Heart left ventricle (tissue), 16 donors: ENCODE measurements at regions of chrX and their contacts with region 1.

Region 1: GRCh38 chrX:45445745-45446412 is 245.2 kb upstream of the DIPK2B start:
- DNase-seq: no peak
- ATAC-seq: no peak
- H3K4me3 ChIP-seq: no peak overlapping the region
- H3K27ac ChIP-seq: no peak overlapping the region
- H3K4me1 ChIP-seq: no peaks in the 10 kb centered on the region
- H3K27me3 ChIP-seq: peaks cover 0 to 29% (median 0%) of the 10 kb centered on the region in 9 donors
- CTCF ChIP-seq: no peak
- POLR2A ChIP-seq: no peak

Region 2: DNA sequence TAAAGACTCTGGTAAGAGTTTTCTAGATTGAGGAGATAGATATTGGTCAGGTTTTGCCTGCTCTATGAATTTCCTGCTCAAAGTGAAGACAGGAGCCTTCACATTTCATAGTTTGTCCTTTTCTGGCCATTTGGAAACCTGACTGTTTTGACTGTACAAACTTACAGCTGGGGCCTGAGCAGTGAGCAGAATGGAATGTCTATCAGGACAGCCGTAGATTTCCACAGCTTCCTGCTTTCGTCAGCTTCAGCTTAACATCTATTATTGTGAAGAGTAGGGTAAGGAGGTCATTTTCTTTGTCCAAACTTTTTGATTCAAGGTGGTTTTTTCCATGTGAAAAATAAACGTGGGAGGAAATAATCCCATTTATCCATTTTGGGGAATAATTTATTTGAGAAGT is 120.9 kb before region 1 on chrX:
- intact Hi-C with region 1: no loop called
- DNase-seq: no peak
- ATAC-seq: no peak
- H3K4me3 ChIP-seq: no peak overlapping the region
- H3K27ac ChIP-seq: no peak overlapping the region
- H3K4me1 ChIP-seq: no peaks in the 10 kb centered on the region
- H3K27me3 ChIP-seq: peaks cover 0 to 39% (median 0%) of the 10 kb centered on the region in 9 donors
- CTCF ChIP-seq: no peak
- POLR2A ChIP-seq: no peak

Region 3: DNA sequence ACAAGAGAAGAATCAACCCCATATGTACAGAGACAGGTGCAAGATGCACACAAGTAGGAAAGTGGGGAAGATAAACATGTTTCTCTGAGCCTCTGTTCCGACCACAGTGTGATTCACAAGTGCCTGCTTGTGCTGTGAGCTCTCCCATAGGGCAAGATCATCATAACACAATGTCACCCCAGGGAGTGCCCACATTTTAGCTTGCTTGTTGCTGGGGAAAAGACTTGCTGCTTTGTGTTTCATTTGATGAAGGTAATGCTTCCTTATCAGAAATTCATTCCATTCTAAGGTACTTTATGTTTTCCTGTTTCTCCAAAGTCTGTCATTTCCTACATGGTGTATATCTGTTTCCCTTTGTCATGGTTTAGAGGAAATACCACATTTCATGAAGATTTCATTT is 59.3 kb after region 1 on chrX:
- intact Hi-C with region 1: loop called in 1 of 10 experiments (anchors 10 kb)
- DNase-seq: no peak
- ATAC-seq: no peak
- H3K4me3 ChIP-seq: no peak overlapping the region
- H3K27ac ChIP-seq: peak overlapping the region in 1 of 12 donors; percentile 81
- H3K4me1 ChIP-seq: peaks cover 0 to 30% (median 14%) of the 10 kb centered on the region in 12 donors
- H3K27me3 ChIP-seq: peaks cover 0 to 5% (median 0%) of the 10 kb centered on the region in 9 donors
- CTCF ChIP-seq: no peak
- POLR2A ChIP-seq: no peak

Region 4: DNA sequence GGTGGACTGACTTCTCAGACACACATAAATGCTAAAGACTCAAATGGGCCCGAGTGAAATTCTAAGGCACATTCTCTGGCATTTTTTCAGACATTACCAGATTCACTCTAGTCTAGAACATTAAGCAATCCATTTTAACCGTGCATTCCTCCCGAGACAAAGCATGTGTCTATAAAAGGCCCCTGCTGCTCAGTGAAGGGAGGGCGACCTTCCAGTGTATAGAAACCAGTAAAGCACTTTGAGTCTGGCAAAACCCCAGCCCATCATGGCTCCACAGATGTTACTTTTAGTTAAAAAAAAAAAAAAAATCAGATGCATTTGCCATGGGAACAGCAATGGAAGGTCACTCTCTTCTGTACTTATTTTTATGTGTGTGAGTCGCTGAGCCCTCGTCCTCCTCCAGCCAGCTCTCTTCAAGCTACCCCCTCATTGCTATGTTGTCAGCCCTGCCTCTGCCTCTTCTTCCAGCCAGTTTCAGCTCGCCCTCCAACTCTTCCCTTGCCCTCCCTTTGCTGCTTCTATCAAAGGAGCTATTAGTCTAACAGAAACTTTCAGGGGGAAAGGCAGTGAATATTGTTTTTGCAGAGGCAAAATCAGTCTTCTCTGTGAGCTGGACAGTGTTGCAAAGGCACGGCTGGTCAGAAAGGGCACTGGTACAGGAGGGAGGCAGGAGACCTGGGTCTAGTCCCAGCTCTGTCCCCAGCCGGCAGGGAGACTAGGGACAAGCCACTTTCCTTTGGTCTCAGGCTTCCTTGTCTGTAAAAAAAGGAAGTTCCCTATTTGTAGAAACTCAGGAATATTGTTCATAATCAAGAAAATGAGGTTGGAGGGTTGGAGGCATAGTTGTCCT is 455.1 kb after region 1 on chrX:
- intact Hi-C with region 1: no loop called
- DNase-seq: no peak
- ATAC-seq: no peak
- H3K4me3 ChIP-seq: no peak overlapping the region
- H3K27ac ChIP-seq: no peak overlapping the region
- H3K4me1 ChIP-seq: no peaks in the 10 kb centered on the region
- H3K27me3 ChIP-seq: peaks cover 0 to 28% (median 0%) of the 10 kb centered on the region in 9 donors
- CTCF ChIP-seq: no peak
- POLR2A ChIP-seq: no peak

Region 5: GRCh38 chrX:45986971-45987370 is 541.1 kb after region 1 on chrX:
- intact Hi-C with region 1: no loop called
- DNase-seq: no peak
- ATAC-seq: no peak
- H3K4me3 ChIP-seq: no peak overlapping the region
- H3K27ac ChIP-seq: no peak overlapping the region
- H3K4me1 ChIP-seq: no peaks in the 10 kb centered on the region
- H3K27me3 ChIP-seq: peaks cover 0 to 12% (median 0%) of the 10 kb centered on the region in 9 donors
- CTCF ChIP-seq: no peak
- POLR2A ChIP-seq: no peak